Dorsolateral prefrontal cortex (tissue), 120 donors: ENCODE measurements at regions of chr16 and their contacts with region 1.

Region 1: DNA sequence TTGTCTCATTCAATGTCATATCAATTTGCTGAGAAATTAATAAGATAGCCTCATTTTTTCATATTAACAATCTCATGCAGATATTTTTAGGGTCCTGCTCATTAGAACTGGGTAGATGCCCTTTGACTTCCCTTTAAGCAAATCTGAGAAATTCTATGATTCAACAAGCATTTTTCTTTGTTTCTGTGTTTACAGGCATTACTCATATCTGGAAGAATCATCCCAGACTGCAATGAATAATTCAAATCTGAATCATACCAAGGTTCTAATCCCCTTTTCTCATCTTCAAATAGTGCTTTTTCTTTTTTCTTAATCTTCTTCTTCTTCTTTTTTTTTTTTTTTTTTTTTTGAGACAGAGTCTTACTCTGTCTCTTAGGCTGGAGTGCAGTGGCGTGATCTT is 69.2 kb upstream of the KIFC3 start:
- DNase-seq: no peak
- H3K4me3 ChIP-seq: no peak overlapping the region
- H3K27ac ChIP-seq: no peak overlapping the region
- H3K27me3 ChIP-seq: peaks cover 0 to 14% (median 0%) of the 10 kb centered on the region in 45 donors
- CTCF ChIP-seq: no peak

Region 2: DNA sequence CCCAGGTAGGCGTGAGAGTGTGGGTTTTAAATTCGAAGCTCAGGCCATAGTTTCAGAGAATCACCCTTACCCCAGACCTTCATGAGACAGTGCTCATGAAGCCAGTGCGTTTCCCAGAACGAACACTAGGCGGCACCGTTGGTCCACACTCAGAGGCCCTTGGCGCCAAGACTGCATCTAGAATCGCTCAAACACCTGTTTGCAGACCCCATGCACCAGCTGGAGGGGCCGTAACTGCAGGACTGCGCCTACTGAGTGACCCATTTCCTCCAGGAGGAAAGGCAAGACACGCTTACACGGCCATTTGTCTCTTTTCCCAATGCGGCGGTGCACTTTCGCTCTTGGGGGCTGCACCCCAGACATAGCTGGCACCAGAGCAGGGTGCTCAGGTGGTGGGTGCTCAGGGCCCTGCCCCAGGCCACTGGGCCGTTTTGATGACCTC is 295.0 kb before region 1 on chr16:
- intact Hi-C with region 1: loop called in 1 of 2 experiments (anchors 10 kb)
- DNase-seq: peak; percentile 67 to 90 (median 79)
- H3K4me3 ChIP-seq: peak overlapping the region in 6 of 59 donors; percentile 6 to 46 (median 23)
- H3K27ac ChIP-seq: no peak overlapping the region
- H3K27me3 ChIP-seq: peaks cover 0 to 8% (median 0%) of the 10 kb centered on the region in 45 donors
- CTCF ChIP-seq: peak; percentile 62 to 97 (median 92)

Region 3: DNA sequence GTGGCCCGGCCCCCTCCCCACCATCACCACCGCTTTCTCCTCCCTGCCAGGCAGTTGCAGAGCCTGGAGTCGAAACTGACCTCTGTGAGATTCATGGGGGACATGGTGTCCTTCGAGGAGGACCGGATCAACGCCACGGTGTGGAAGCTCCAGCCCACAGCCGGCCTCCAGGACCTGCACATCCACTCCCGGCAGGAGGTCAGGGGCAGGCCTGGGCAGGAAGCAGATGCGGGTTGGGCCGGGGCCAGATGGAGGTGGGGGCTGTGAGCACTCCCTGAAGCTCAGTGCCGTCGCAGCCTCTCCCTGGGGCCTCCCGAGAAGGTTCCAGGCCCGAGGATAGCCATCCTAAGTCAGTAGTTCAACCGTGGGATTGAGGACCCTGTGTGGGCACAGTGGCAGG is 217.5 kb before region 1 on chr16:
- intact Hi-C with region 1: loop called in 1 of 2 experiments (anchors 10 kb)
- DNase-seq: no peak
- H3K4me3 ChIP-seq: no peak overlapping the region
- H3K27ac ChIP-seq: peak overlapping the region in 8 of 59 donors; percentile 7 to 31 (median 18)
- H3K27me3 ChIP-seq: no peaks in the 10 kb centered on the region
- CTCF ChIP-seq: no peak

Region 4: DNA sequence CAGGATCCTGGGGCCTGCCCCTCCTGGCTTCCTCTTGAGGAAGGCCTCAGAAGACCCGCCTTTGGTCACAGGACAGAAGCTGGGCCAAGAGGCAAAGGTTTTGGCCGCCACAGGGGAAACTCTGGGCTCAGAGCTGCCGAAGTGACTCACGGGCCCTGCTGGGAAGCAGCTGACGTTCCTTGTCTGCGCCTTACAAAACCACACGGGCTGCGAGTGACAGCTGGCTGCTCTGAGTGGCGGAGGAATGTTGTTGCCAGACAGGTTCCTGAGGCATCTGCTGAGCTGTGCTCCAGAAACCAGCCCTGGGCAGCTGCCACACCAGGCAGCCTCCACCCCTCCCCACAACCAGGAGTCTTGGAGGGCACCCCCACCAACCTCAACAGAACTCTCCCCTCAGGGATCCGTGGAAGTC is 55.1 kb before region 1 on chr16:
- intact Hi-C with region 1: no loop called
- DNase-seq: peak in 8 of 10 donors; percentile 36 to 86 (median 67)
- H3K4me3 ChIP-seq: no peak overlapping the region
- H3K27ac ChIP-seq: peak overlapping the region in 28 of 59 donors; percentile 1 to 72 (median 40)
- H3K27me3 ChIP-seq: no peaks in the 10 kb centered on the region
- CTCF ChIP-seq: no peak